CD4-positive, alpha-beta memory T cell (primary cell): ENCODE measurements at regions of chr20 and their contacts with region 1.

Region 1: GRCh38 chr20:58650776-58651558 is at the start of gene STX16:
- DNase-seq: peak; percentile 81 to 87 (median 82)
- H3K4me3 ChIP-seq: peak within 1 kb of the TSS; percentile 94 to 96
- H3K4me3 Mint-ChIP-seq: peak within 1 kb of the TSS; percentile 98 to 99 (median 99)
- H3K27ac ChIP-seq: peak within 1 kb of the TSS; percentile 94
- H3K27ac Mint-ChIP-seq: peak within 1 kb of the TSS; percentile 97 to 100 (median 99)
- H3K4me1 ChIP-seq: peaks cover 38% of the 10 kb centered on the region
- H3K4me1 Mint-ChIP-seq: peaks cover 9 to 45% (median 20%) of the 10 kb centered on the region in 4 donors
- H3K27me3 ChIP-seq: no peaks in the 10 kb centered on the region
- H3K27me3 Mint-ChIP-seq: peaks cover 0 to 1% of the 10 kb centered on the region in 2 donors
- total RNA-seq, gene STX16: 158 to 167 TPM

Region 2: DNA sequence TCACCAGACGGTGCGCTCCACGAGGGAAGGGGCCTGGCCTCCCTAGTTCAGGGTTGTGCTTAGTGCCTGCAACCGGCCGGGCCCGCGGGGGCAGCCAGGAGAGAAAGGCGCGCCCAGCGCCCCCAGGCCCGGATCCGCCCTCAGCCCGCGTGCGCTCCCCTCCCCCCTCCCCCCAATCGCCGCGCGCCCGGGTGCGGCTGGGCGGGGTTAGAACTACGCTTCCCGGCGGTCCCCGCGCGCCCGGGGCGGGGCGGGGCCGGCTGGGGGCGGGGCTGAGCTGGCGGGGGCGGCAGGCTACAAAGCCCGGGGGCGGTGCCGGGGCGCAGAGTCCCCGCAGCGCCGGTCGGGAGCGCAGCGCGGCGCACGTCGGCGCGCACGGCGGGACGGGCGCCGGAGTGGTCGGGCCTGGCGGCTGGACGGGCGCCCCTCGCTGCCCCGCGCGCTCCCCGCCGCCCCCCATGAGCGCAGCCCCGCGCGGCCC is 1259.9 kb before region 1 on chr20 and contains the start of gene RBM38:
- CTCF ChIA-PET with region 1: no interaction called
- POLR2A ChIA-PET with region 1: interaction called, 8 read pairs
- intact Hi-C with region 1: loop called (anchors 10 kb)
- DNase-seq: peak; percentile 56 to 78 (median 72)
- H3K4me3 ChIP-seq: peak within 1 kb of the TSS; percentile 81 to 99
- H3K4me3 Mint-ChIP-seq: peak within 1 kb of the TSS; percentile 91 to 100 (median 97)
- H3K27ac ChIP-seq: peak within 1 kb of the TSS; percentile 84
- H3K27ac Mint-ChIP-seq: peak within 1 kb of the TSS; percentile 97 to 100 (median 99)
- H3K4me1 ChIP-seq: peaks cover 50% of the 10 kb centered on the region
- H3K4me1 Mint-ChIP-seq: peaks cover 29 to 64% (median 41%) of the 10 kb centered on the region in 4 donors
- H3K27me3 ChIP-seq: no peaks in the 10 kb centered on the region
- H3K27me3 Mint-ChIP-seq: no peaks in the 10 kb centered on the region
- total RNA-seq, gene RBM38: 76.0 to 79.6 TPM

Region 3: GRCh38 chr20:58309575-58310290 is 341.2 kb before region 1 on chr20 and contains the start of gene RAB22A:
- CTCF ChIA-PET with region 1: no interaction called
- POLR2A ChIA-PET with region 1: interaction called, 19 read pairs
- intact Hi-C with region 1: loop called (anchors 2 kb)
- DNase-seq: peak; percentile 77 to 88 (median 83)
- H3K4me3 ChIP-seq: peak within 1 kb of the TSS; percentile 62 to 72
- H3K4me3 Mint-ChIP-seq: peak within 1 kb of the TSS; percentile 88 to 98 (median 94)
- H3K27ac ChIP-seq: peak within 1 kb of the TSS; percentile 87
- H3K27ac Mint-ChIP-seq: peak within 1 kb of the TSS; percentile 95 to 99 (median 99)
- H3K4me1 ChIP-seq: peaks cover 68% of the 10 kb centered on the region
- H3K4me1 Mint-ChIP-seq: peaks cover 40 to 71% (median 56%) of the 10 kb centered on the region in 4 donors
- H3K27me3 ChIP-seq: no peaks in the 10 kb centered on the region
- H3K27me3 Mint-ChIP-seq: no peaks in the 10 kb centered on the region
- total RNA-seq, gene RAB22A: 23.6 TPM

Region 4: DNA sequence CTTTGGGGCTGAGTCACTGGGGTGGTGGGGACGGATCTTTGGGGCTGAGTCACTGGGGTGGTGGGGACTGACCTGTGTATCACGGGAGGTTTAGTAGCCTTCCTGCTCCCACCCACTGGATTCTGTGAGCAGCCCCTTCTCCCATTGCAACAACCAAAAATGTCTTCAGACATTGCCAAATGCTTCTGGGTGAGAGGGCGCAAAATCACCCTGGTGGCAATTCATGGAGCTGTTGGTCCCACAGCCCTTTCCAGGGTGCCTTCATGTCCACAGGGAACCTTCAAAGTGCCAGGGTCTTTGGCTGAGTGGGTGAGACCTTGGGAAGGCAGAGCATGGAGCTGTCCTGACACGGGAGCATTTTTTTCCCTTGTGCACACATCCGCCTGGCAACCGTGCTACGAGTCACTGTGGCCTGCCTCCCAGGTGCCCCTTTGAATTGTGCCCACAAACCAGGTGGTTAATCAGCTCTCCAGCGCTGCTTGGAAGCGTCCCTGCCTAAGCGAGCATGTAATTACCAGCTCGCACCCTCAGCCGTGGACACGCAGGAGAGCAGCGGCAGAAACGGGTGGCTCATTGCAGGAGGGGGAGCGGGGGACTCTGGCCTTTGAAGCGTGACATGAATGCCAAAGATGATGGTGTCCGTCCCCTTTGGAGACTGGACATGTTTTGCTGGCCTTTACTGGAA is 108.4 kb before region 1 on chr20:
- CTCF ChIA-PET with region 1: no interaction called
- POLR2A ChIA-PET with region 1: no interaction called
- intact Hi-C with region 1: no loop called
- DNase-seq: no peak
- H3K4me3 ChIP-seq: no peak overlapping the region
- H3K4me3 Mint-ChIP-seq: no peak overlapping the region
- H3K27ac ChIP-seq: no peak overlapping the region
- H3K27ac Mint-ChIP-seq: no peak overlapping the region
- H3K4me1 ChIP-seq: no peaks in the 10 kb centered on the region
- H3K4me1 Mint-ChIP-seq: no peaks in the 10 kb centered on the region
- H3K27me3 ChIP-seq: peaks cover 2% of the 10 kb centered on the region
- H3K27me3 Mint-ChIP-seq: peaks cover 11 to 12% of the 10 kb centered on the region in 2 donors

Region 5: DNA sequence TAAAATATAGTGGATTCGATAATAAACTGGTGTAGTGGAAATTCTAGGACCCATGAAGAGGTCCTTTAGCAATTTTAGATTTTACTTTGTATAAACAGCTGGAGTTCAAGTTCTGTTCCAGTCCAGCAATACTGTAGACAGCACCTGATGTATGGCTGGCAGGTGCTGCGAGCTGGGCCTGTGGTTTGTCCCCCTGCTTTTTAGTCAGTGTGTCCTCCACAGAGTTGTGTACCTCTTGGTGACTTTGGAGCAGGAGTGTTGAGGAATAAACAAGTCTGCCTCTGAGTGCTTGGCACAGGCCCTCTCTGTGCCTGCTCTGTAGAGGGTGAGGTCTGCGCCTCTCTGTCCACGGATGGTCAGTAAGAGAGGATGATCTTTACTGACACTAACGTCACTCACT is 13.9 kb after region 1 on chr20:
- CTCF ChIA-PET with region 1: interaction called, 12 read pairs
- POLR2A ChIA-PET with region 1: interaction called, 112 read pairs
- intact Hi-C with region 1: loop called (anchors 1 kb)
- DNase-seq: no peak
- H3K4me3 ChIP-seq: no peak overlapping the region
- H3K4me3 Mint-ChIP-seq: no peak overlapping the region
- H3K27ac ChIP-seq: no peak overlapping the region
- H3K27ac Mint-ChIP-seq: peak overlapping the region in 5 of 7 donors; percentile 44 to 81 (median 54)
- H3K4me1 ChIP-seq: peaks cover 54% of the 10 kb centered on the region
- H3K4me1 Mint-ChIP-seq: peaks cover 34 to 66% (median 51%) of the 10 kb centered on the region in 4 donors
- H3K27me3 ChIP-seq: no peaks in the 10 kb centered on the region
- H3K27me3 Mint-ChIP-seq: no peaks in the 10 kb centered on the region

Region 6: DNA sequence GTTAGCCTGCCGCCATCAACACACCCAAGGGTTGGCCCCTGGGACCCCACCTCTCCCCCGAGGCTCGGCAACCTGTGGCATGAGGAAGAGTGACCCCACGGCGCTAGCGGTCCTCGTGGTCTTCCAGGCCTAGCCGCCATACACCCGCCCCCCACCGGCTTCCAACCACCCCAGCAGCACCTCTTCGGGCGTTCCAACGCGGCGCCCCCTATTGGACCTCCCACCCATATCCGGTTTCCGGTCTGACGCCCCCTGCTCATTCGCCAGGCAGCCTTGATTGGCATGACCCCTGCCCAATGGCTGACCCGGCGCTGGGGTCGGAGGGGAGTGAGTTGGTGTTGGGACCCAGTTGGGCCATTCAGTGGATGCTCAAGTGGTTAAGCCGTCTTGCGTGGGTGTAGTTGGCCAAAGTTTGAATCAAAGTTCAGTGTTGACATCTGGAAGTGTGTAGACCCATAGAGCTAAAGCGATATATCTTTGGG is 199.8 kb after region 1 on chr20 and contains the start of gene GNAS-AS1:
- CTCF ChIA-PET with region 1: interaction called, 4 read pairs
- POLR2A ChIA-PET with region 1: interaction called, 9 read pairs
- intact Hi-C with region 1: loop called (anchors 1 kb)
- DNase-seq: peak; percentile 62 to 73 (median 73)
- H3K4me3 ChIP-seq: peak within 1 kb of the TSS in 1 of 2 donors; percentile 46
- H3K4me3 Mint-ChIP-seq: peak within 1 kb of the TSS; percentile 86 to 95 (median 90)
- H3K27ac ChIP-seq: no peak within 1 kb of the TSS
- H3K27ac Mint-ChIP-seq: peak within 1 kb of the TSS in 2 of 7 donors; percentile 46 to 75
- H3K4me1 ChIP-seq: peaks cover 13% of the 10 kb centered on the region
- H3K4me1 Mint-ChIP-seq: peaks cover 4 to 19% (median 13%) of the 10 kb centered on the region in 4 donors
- H3K27me3 ChIP-seq: peaks cover 16% of the 10 kb centered on the region
- H3K27me3 Mint-ChIP-seq: peaks cover 29 to 32% of the 10 kb centered on the region in 2 donors
- total RNA-seq, gene GNAS-AS1: 0.94 to 1.1 TPM

Region 7: GRCh38 chr20:58907399-58908137 is 256.6 kb after region 1 on chr20:
- CTCF ChIA-PET with region 1: no interaction called
- POLR2A ChIA-PET with region 1: no interaction called
- intact Hi-C with region 1: no loop called
- DNase-seq: peak; percentile 68 to 83 (median 71)
- H3K4me3 ChIP-seq: no peak overlapping the region
- H3K4me3 Mint-ChIP-seq: peak overlapping the region; percentile 75 to 91 (median 80)
- H3K27ac ChIP-seq: peak overlapping the region; percentile 23
- H3K27ac Mint-ChIP-seq: peak overlapping the region; percentile 78 to 97 (median 92)
- H3K4me1 ChIP-seq: peaks cover 30% of the 10 kb centered on the region
- H3K4me1 Mint-ChIP-seq: peaks cover 32 to 71% (median 48%) of the 10 kb centered on the region in 4 donors
- H3K27me3 ChIP-seq: no peaks in the 10 kb centered on the region
- H3K27me3 Mint-ChIP-seq: peaks cover 0 to 2% of the 10 kb centered on the region in 2 donors

Region 8: DNA sequence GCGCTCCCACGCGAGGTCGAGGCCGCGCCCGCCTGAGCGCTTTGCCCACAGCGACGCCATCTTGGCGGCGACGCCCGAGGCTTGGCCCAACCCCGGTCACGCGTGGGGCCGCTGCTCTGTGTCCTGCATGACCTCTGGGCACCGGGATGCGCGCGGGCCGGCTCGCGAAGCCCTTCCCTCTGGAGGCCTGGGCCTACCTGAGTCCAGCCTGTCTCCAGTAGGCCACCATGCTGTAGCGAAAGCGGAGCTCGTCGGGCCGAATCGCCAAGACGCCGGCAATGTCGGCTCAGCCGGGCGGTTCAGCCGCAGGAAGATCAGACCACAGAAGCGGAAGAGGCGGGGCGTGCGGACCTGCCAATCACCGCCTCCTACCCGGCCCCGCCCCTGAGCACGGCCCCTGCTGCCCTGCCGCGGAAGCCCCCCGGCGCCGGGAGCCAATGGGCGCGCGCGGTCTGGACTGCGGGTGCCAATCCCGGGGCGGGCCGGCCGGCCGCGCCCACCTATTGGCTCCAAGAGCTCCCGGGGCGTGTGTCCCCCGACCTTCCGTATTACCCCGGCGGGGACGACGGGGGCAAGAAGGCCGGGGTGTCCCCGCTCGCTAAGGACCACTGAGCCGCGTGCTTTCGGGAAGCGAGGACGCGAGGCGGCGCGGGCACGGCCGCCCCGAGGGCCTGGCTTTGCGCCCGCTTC is 381.2 kb after region 1 on chr20 and contains the start of gene ATP5F1E:
- CTCF ChIA-PET with region 1: no interaction called
- POLR2A ChIA-PET with region 1: interaction called, 23 read pairs
- intact Hi-C with region 1: no loop called
- DNase-seq: peak; percentile 96 to 97 (median 96)
- H3K4me3 ChIP-seq: peak within 1 kb of the TSS; percentile 71 to 82
- H3K4me3 Mint-ChIP-seq: peak within 1 kb of the TSS; percentile 91 to 97 (median 94)
- H3K27ac ChIP-seq: peak within 1 kb of the TSS; percentile 82
- H3K27ac Mint-ChIP-seq: peak within 1 kb of the TSS; percentile 94 to 98 (median 96)
- H3K4me1 ChIP-seq: peaks cover 50% of the 10 kb centered on the region
- H3K4me1 Mint-ChIP-seq: peaks cover 42 to 63% (median 52%) of the 10 kb centered on the region in 4 donors
- H3K27me3 ChIP-seq: no peaks in the 10 kb centered on the region
- H3K27me3 Mint-ChIP-seq: no peaks in the 10 kb centered on the region
- total RNA-seq, gene ATP5F1E: 77.2 to 84.5 TPM